Activated CD8-positive, alpha-beta T cell treated with anti-CD3 and anti-CD28 coated beads for 36 hours (primary cell): ENCODE measurements at regions of chr1 and their contacts with region 1.

Region 1: GRCh38 chr1:110766025-110766647 is 91.4 kb upstream of the KCNA3 start:
- DNase-seq: peak; percentile 75
- ATAC-seq: peak; percentile 76
- H3K4me3 Mint-ChIP-seq: no peak overlapping the region
- H3K27ac Mint-ChIP-seq: no peak overlapping the region
- H3K4me1 Mint-ChIP-seq: peaks cover 1% of the 10 kb centered on the region
- H3K27me3 Mint-ChIP-seq: peaks cover 2% of the 10 kb centered on the region
- CTCF ChIP-seq: peak; percentile 90

Region 2: DNA sequence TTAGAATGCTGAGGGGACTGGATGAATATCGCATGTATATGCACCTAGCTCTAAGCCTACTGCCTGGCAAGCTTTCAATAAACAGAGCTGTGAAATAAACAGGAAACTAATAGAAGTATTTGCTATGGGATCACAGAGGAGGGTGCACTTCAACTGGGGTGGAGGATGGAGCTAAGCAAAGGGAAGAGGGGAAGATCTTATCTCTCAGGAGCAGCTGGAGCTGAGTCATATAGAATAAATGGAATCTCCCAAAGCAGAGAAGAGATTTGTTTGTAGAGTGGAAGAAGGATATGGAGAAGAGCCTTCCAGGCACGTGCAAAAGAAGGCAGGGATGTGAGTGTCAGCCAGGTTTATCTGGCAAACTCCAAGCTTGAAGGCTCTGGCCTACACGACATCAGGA is 230.2 kb before region 1 on chr1:
- CTCF ChIA-PET with region 1: interaction called, 21 read pairs
- POLR2A ChIA-PET with region 1: no interaction called
- intact Hi-C with region 1: no loop called
- DNase-seq: no peak
- ATAC-seq: no peak
- H3K4me3 Mint-ChIP-seq: no peak overlapping the region
- H3K27ac Mint-ChIP-seq: no peak overlapping the region
- H3K4me1 Mint-ChIP-seq: no peaks in the 10 kb centered on the region
- H3K27me3 Mint-ChIP-seq: no peaks in the 10 kb centered on the region
- CTCF ChIP-seq: no peak

Region 3: DNA sequence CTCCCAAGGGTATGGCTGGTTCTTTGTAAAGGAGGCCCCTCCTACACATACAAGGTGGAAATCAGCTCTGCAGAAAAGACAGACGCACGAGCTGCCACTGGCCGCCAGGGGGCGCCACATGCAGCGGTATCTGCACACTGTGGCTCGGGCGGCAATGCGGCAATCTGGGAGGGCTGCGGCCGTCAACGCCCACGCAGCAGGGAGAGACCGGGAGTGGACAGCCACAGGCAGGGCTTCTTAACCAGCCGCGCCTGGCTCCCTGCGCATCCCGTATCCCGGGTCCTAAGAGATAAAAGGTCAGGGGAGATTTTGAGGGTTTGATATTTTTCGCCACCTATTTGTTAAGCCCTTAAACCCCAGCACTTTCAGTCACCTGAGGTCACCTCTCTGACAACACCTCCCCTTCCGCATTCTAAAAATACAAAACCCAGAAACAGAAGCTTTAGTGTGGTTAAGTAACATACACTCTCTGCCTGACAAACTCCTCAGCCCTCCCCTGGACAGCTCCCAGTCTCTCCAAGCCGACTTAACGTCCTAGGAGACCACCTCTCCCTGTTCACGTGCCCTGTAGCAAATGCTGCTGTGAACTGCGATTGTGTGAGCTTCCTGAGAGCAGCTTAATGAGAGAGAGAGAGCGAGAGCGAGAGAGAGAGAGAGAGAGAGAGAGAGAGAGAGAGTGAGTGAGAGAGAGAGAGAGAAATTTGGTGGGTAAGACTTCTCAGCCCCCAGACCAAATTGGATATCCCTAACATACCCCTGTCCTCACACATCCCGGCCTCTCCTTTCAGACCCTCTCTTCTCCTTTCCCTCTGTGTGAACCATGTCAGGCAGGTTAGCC is 146.5 kb before region 1 on chr1:
- CTCF ChIA-PET with region 1: interaction called, 206 read pairs
- POLR2A ChIA-PET with region 1: interaction called, 11 read pairs
- intact Hi-C with region 1: loop called (anchors 1 kb)
- DNase-seq: peak; percentile 91
- ATAC-seq: peak; percentile 90
- H3K4me3 Mint-ChIP-seq: peak overlapping the region; percentile 76
- H3K27ac Mint-ChIP-seq: peak overlapping the region; percentile 77
- H3K4me1 Mint-ChIP-seq: peaks cover 27% of the 10 kb centered on the region
- H3K27me3 Mint-ChIP-seq: no peaks in the 10 kb centered on the region
- CTCF ChIP-seq: peak; percentile 94

Region 4: GRCh38 chr1:110674337-110675059 is 91.6 kb before region 1 on chr1 and contains the start of gene KCNA3:
- CTCF ChIA-PET with region 1: interaction called, 36 read pairs
- POLR2A ChIA-PET with region 1: interaction called, 10 read pairs
- intact Hi-C with region 1: no loop called
- DNase-seq: peak; percentile 74
- ATAC-seq: peak; percentile 28
- H3K4me3 Mint-ChIP-seq: peak within 1 kb of the TSS; percentile 100
- H3K27ac Mint-ChIP-seq: peak within 1 kb of the TSS; percentile 98
- H3K4me1 Mint-ChIP-seq: peaks cover 30% of the 10 kb centered on the region
- H3K27me3 Mint-ChIP-seq: no peaks in the 10 kb centered on the region
- CTCF ChIP-seq: peak; percentile 47
- total RNA-seq, gene KCNA3: 15.5 to 16.2 TPM

Region 5: GRCh38 chr1:110749960-110750359 is 16.2 kb before region 1 on chr1:
- CTCF ChIA-PET with region 1: interaction called, 13 read pairs
- POLR2A ChIA-PET with region 1: interaction called, 3 read pairs
- intact Hi-C with region 1: no loop called
- DNase-seq: no peak
- ATAC-seq: no peak
- H3K4me3 Mint-ChIP-seq: no peak overlapping the region
- H3K27ac Mint-ChIP-seq: no peak overlapping the region
- H3K4me1 Mint-ChIP-seq: no peaks in the 10 kb centered on the region
- H3K27me3 Mint-ChIP-seq: peaks cover 3% of the 10 kb centered on the region
- CTCF ChIP-seq: no peak

Region 6: DNA sequence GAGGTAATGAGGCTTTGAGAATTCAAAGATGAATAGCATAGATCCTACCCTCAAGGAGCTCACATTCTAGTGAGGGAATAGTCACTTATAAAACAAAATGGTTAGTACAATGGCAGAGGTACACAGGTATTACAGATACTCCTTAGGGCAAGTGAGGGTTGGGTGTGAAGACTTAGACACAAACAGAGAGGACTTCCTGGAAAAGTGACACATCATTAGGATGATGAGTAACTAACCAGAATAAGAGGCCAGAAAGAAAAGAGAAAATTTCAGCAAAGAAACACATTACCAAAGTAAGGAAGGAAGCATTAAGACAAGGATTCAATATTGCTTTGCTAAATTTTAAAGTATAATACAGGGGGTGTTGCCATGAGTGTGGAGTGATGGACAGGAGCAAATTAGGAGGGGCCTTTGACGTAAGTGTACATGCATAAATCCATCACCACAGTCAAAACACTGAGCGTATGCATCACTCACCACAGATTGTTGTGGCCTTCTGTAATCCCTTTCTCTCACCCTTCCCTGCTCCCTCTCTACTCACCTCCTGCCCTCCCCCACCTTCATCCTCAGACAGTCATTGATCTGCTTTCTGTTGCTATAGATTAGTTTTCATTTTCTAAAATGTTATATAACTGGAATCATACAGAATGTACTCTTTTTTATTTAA is 114.7 kb after region 1 on chr1:
- CTCF ChIA-PET with region 1: no interaction called
- POLR2A ChIA-PET with region 1: no interaction called
- intact Hi-C with region 1: no loop called
- DNase-seq: peak; percentile 77
- ATAC-seq: peak; percentile 67
- H3K4me3 Mint-ChIP-seq: peak overlapping the region; percentile 91
- H3K27ac Mint-ChIP-seq: peak overlapping the region; percentile 99
- H3K4me1 Mint-ChIP-seq: peaks cover 53% of the 10 kb centered on the region
- H3K27me3 Mint-ChIP-seq: no peaks in the 10 kb centered on the region
- CTCF ChIP-seq: no peak